CD4-positive, alpha-beta memory T cell (primary cell): ENCODE measurements at regions of chr5 and their contacts with region 1.

Region 1: DNA sequence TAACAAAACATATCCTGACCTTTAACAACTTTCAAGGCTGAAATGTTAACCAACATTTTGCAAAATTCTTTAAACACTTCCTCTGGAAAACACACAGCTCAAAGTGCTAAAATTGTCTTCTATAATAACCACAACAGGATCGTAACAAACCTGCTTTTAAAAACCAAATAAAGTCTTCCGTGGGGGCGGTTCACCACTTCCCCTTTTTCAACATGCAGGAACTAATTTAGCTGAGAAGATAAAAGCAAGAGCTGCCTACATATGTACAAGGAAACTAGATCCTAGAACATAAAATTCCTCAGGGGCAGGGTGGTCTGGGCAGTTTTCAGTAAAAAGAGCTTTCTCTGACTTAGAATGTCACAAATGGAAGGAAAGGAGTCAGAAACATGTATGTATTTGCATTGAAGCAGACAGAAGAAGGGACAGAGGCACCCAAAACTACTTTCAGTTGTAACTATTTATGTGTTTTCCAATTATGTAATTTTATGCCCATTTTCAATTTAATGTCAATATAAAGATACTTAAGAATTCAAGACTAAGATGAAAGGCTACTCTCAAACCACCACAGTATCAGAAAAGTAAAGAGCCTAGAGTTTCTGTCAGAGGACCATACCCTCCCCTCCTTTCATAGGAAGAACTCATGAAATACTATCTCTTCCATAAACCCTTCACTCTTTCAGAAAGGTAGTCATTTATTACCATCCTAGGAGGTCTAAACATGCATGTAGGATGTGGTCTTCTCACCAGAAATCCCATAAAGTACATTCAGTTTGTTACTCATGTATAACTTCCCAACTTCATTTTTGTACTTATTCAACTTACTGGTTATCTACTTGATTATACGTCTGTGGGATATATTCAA is 185.9 kb upstream of the RASA1 start:
- DNase-seq: peak; percentile 41 to 55 (median 48)
- H3K4me3 ChIP-seq: no peak overlapping the region
- H3K4me3 Mint-ChIP-seq: peak overlapping the region; percentile 63 to 84 (median 76)
- H3K27ac ChIP-seq: no peak overlapping the region
- H3K27ac Mint-ChIP-seq: peak overlapping the region; percentile 42 to 90 (median 81)
- H3K4me1 ChIP-seq: peaks cover 48% of the 10 kb centered on the region
- H3K4me1 Mint-ChIP-seq: peaks cover 31 to 60% (median 43%) of the 10 kb centered on the region in 4 donors
- H3K27me3 ChIP-seq: no peaks in the 10 kb centered on the region
- H3K27me3 Mint-ChIP-seq: no peaks in the 10 kb centered on the region

Region 2: DNA sequence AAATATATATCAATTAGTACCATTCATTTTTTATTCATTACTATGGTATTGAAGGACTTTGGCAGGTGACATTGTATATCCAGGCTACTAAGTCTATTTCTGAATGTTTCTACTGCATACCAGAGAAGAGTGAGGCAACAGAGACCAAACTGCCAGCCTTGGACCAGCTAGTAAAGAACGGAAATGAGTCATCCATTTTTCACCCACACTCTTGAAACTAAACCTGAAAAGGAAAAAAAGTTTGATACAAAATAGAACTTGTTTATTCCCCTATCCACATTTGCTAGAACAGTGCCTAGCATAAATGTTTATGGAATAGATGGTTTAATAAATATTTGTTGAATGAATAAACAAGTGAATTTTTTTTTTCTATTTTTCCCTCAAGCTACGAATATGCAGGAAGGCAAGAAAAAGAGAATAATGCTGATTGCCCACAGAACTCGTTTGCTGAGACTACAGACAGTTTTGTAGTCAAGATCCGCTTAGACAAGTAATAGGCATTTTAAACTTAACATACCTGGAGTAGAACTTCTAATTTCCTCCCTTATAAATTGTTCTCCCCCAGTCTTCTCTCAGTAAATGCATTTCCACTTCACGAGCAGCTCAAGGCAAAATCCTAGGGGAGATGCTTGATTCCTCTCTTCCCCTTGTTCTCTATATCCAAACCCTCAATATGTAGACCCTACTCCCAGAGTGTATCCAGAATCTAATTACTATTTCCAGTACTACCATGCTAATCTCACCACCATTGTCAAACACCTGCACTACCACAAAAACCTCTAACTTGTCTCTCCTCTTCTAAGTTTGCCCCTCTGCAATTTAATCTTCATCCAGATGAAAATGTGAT is 39.8 kb after region 1 on chr5:
- CTCF ChIA-PET with region 1: interaction called, 3 read pairs
- POLR2A ChIA-PET with region 1: interaction called, 3 read pairs
- intact Hi-C with region 1: loop called (anchors 5 kb)
- DNase-seq: peak; percentile 29 to 69 (median 46)
- H3K4me3 ChIP-seq: no peak overlapping the region
- H3K4me3 Mint-ChIP-seq: peak overlapping the region; percentile 40 to 88 (median 78)
- H3K27ac ChIP-seq: peak overlapping the region; percentile 34
- H3K27ac Mint-ChIP-seq: peak overlapping the region; percentile 54 to 93 (median 83)
- H3K4me1 ChIP-seq: peaks cover 37% of the 10 kb centered on the region
- H3K4me1 Mint-ChIP-seq: peaks cover 26 to 48% (median 37%) of the 10 kb centered on the region in 4 donors
- H3K27me3 ChIP-seq: no peaks in the 10 kb centered on the region
- H3K27me3 Mint-ChIP-seq: no peaks in the 10 kb centered on the region

Region 3: GRCh38 chr5:87156643-87157042 is 74.9 kb after region 1 on chr5:
- CTCF ChIA-PET with region 1: no interaction called
- POLR2A ChIA-PET with region 1: no interaction called
- intact Hi-C with region 1: no loop called
- DNase-seq: no peak
- H3K4me3 ChIP-seq: no peak overlapping the region
- H3K4me3 Mint-ChIP-seq: no peak overlapping the region
- H3K27ac ChIP-seq: no peak overlapping the region
- H3K27ac Mint-ChIP-seq: no peak overlapping the region
- H3K4me1 ChIP-seq: no peaks in the 10 kb centered on the region
- H3K4me1 Mint-ChIP-seq: peaks cover 0 to 1% (median under 1%) of the 10 kb centered on the region in 4 donors
- H3K27me3 ChIP-seq: no peaks in the 10 kb centered on the region
- H3K27me3 Mint-ChIP-seq: no peaks in the 10 kb centered on the region